Activated B cell treated with CpG ODN at 0.5 μM for 24 hours (primary cell): ENCODE measurements at regions of chr12 and their contacts with region 1.

Region 1: GRCh38 chr12:92570056-92570753 is 132.6 kb upstream of the PLEKHG7 start:
- DNase-seq: no peak
- ATAC-seq: peak; percentile 95
- H3K4me3 Mint-ChIP-seq: no peak overlapping the region
- H3K27ac Mint-ChIP-seq: no peak overlapping the region
- H3K4me1 Mint-ChIP-seq: peaks cover 28% of the 10 kb centered on the region
- H3K27me3 Mint-ChIP-seq: no peaks in the 10 kb centered on the region
- CTCF ChIP-seq: peak; percentile 99

Region 2: GRCh38 chr12:91811481-91812287 is 758.5 kb before region 1 on chr12:
- CTCF ChIA-PET with region 1: interaction called, 11 read pairs
- POLR2A ChIA-PET with region 1: interaction called, 3 read pairs
- intact Hi-C with region 1: loop called (anchors 1 kb)
- DNase-seq: peak; percentile 57
- ATAC-seq: peak; percentile 71
- H3K4me3 Mint-ChIP-seq: no peak overlapping the region
- H3K27ac Mint-ChIP-seq: no peak overlapping the region
- H3K4me1 Mint-ChIP-seq: peaks cover 7% of the 10 kb centered on the region
- H3K27me3 Mint-ChIP-seq: no peaks in the 10 kb centered on the region
- CTCF ChIP-seq: no peak

Region 3: DNA sequence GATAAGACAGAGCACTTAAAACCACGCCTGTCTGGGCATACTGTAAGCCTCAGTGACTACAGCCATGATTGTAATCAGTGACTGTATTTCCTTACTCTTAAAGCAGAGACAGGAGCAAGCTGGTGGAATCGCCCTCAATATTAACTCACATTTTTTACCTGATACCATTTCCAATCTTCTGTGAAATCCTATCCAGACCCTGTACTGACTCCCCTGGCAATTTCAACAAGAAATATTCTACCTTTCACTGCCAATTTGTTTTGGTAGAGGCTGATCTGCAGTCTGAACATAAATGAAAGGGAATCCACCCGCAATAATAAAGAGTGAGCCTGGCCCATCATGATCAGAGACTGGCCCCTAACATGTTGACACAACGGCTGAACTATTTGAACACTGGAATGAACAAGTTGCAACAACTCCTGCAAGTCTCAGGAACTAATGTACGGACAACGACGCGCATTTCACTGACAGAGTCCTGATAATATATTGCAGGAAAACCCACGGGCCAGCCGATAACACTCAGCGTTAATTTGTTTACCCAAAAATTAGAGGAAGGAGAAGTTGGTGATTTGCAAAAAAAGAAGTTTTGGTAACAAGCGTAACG is 229.0 kb before region 1 on chr12:
- CTCF ChIA-PET with region 1: no interaction called
- POLR2A ChIA-PET with region 1: no interaction called
- intact Hi-C with region 1: no loop called
- DNase-seq: no peak
- ATAC-seq: peak; percentile 84
- H3K4me3 Mint-ChIP-seq: peak overlapping the region; percentile 79
- H3K27ac Mint-ChIP-seq: peak overlapping the region; percentile 91
- H3K4me1 Mint-ChIP-seq: peaks cover 43% of the 10 kb centered on the region
- H3K27me3 Mint-ChIP-seq: no peaks in the 10 kb centered on the region
- CTCF ChIP-seq: no peak

Region 4: GRCh38 chr12:92363295-92364146 is 206.7 kb before region 1 on chr12:
- CTCF ChIA-PET with region 1: interaction called, 15 read pairs
- POLR2A ChIA-PET with region 1: interaction called, 24 read pairs
- intact Hi-C with region 1: loop called (anchors 1 kb)
- DNase-seq: peak; percentile 50
- ATAC-seq: peak; percentile 75
- H3K4me3 Mint-ChIP-seq: peak overlapping the region; percentile 88
- H3K27ac Mint-ChIP-seq: peak overlapping the region; percentile 98
- H3K4me1 Mint-ChIP-seq: peaks cover 76% of the 10 kb centered on the region
- H3K27me3 Mint-ChIP-seq: no peaks in the 10 kb centered on the region
- CTCF ChIP-seq: no peak

Region 5: GRCh38 chr12:92445253-92446082 is 124.7 kb before region 1 on chr12:
- CTCF ChIA-PET with region 1: interaction called, 37 read pairs
- POLR2A ChIA-PET with region 1: interaction called, 68 read pairs
- intact Hi-C with region 1: loop called (anchors 1 kb)
- DNase-seq: peak; percentile 55
- ATAC-seq: peak; percentile 71
- H3K4me3 Mint-ChIP-seq: peak overlapping the region; percentile 67
- H3K27ac Mint-ChIP-seq: peak overlapping the region; percentile 97
- H3K4me1 Mint-ChIP-seq: peaks cover 95% of the 10 kb centered on the region
- H3K27me3 Mint-ChIP-seq: no peaks in the 10 kb centered on the region
- CTCF ChIP-seq: no peak

Region 6: GRCh38 chr12:92556141-92556540 is 14.1 kb before region 1 on chr12:
- CTCF ChIA-PET with region 1: no interaction called
- POLR2A ChIA-PET with region 1: interaction called, 12 read pairs
- intact Hi-C with region 1: no loop called
- DNase-seq: no peak
- ATAC-seq: peak; percentile 33
- H3K4me3 Mint-ChIP-seq: peak overlapping the region; percentile 69
- H3K27ac Mint-ChIP-seq: peak overlapping the region; percentile 90
- H3K4me1 Mint-ChIP-seq: peaks cover 64% of the 10 kb centered on the region
- H3K27me3 Mint-ChIP-seq: no peaks in the 10 kb centered on the region
- CTCF ChIP-seq: no peak

Region 7: GRCh38 chr12:94101738-94102660 is 1531.8 kb after region 1 on chr12:
- CTCF ChIA-PET with region 1: interaction called, 4 read pairs
- POLR2A ChIA-PET with region 1: no interaction called
- intact Hi-C with region 1: loop called (anchors 2 kb)
- DNase-seq: peak; percentile 64
- ATAC-seq: peak; percentile 87
- H3K4me3 Mint-ChIP-seq: peak overlapping the region; percentile 83
- H3K27ac Mint-ChIP-seq: no peak overlapping the region
- H3K4me1 Mint-ChIP-seq: peaks cover 6% of the 10 kb centered on the region
- H3K27me3 Mint-ChIP-seq: peaks cover 54% of the 10 kb centered on the region
- CTCF ChIP-seq: peak; percentile 34